ENCODE measurements at regions of chr12 and their contacts with region 1.

Region 1: GRCh38 chr12:64480148-64480547 is 28.2 kb downstream of the TBK1 start:
- DNase-seq: peak; percentile 11
- H3K4me3 Mint-ChIP-seq: no peak overlapping the region
- H3K27ac Mint-ChIP-seq: no peak overlapping the region
- H3K4me1 Mint-ChIP-seq: no peaks in the 10 kb centered on the region
- H3K27me3 Mint-ChIP-seq: no peaks in the 10 kb centered on the region
- CTCF ChIP-seq: no peak

Region 2: GRCh38 chr12:64412459-64412858 is 67.7 kb before region 1 on chr12:
- CTCF ChIA-PET with region 1: no interaction called
- POLR2A ChIA-PET with region 1: interaction called, 3 read pairs
- intact Hi-C with region 1: loop called (anchors 10 kb)
- DNase-seq: no peak
- H3K4me3 Mint-ChIP-seq: no peak overlapping the region
- H3K27ac Mint-ChIP-seq: peak overlapping the region; percentile 25
- H3K4me1 Mint-ChIP-seq: peaks cover 9% of the 10 kb centered on the region
- H3K27me3 Mint-ChIP-seq: no peaks in the 10 kb centered on the region
- CTCF ChIP-seq: no peak

Region 3: DNA sequence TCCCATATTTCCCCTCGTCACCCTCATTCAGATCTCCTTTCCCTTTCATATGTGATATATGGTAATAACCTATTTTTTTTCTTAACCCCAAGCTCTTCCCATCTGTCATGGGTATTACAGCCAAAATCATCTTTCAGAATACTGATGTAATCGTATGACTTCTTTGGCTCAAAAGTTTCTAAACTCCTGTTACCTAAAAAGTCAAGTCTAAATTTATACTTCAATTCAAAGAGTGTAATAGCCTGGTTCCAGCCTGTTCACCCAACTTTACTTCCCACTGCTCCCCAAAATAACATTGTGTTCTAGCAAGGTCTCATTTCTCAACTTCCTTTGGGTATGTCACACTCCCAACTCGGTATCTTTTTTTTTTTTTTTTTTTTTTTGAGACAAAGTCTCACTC is 20.2 kb after region 1 on chr12:
- CTCF ChIA-PET with region 1: no interaction called
- POLR2A ChIA-PET with region 1: no interaction called
- intact Hi-C with region 1: no loop called
- DNase-seq: no peak
- H3K4me3 Mint-ChIP-seq: no peak overlapping the region
- H3K27ac Mint-ChIP-seq: no peak overlapping the region
- H3K4me1 Mint-ChIP-seq: no peaks in the 10 kb centered on the region
- H3K27me3 Mint-ChIP-seq: no peaks in the 10 kb centered on the region
- CTCF ChIP-seq: no peak

Region 4: GRCh38 chr12:64780531-64781279 is 300.6 kb after region 1 on chr12:
- CTCF ChIA-PET with region 1: no interaction called
- POLR2A ChIA-PET with region 1: no interaction called
- intact Hi-C with region 1: no loop called
- DNase-seq: peak; percentile 57
- H3K4me3 Mint-ChIP-seq: peak overlapping the region; percentile 80
- H3K27ac Mint-ChIP-seq: peak overlapping the region; percentile 23
- H3K4me1 Mint-ChIP-seq: peaks cover 7% of the 10 kb centered on the region
- H3K27me3 Mint-ChIP-seq: peaks cover 17% of the 10 kb centered on the region
- CTCF ChIP-seq: no peak